ENCODE measurements at regions of chr18 and their contacts with region 1.

Region 1: DNA sequence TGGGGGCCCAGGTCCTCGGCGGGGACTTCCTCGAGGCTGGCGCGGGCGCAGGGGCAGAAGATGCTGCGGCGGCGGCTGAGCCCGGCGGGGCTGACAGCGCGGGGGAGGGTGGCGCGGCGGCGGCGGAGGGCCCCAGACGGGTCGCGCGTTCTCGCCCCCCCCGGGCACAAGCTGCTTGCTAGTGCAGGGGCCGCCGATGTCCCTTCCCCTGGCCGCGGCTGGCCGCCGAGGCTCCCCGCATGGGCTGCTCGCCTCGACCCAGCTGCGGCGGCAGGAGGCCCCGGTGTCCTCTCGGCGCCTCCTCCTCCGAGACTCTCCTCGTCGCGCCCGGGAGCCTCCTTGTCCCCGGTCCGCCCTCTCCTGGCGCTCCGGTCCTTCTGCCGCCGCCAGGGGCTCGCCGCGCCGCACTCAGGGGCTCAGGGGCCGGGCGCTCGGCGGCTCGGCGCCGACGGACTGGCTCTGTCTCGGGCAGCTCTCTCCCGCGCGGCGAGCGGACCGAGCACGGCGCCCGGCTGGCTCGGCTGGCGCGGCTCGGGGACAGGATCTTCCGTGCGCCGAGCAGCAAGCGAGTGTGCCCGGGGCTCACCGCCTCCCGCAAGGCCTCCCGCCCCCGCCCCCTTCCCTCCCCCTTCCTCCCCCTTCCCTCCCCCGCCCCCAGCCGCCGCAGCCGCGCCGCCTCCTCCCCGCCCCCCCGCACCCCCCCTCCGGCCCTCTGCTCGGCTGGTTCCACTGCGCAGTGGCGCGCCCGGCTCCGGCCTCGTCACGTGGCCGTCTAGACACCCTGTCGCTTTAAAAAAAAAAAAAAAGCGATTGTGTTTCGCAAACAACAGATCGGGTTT is 902 bp upstream of the SMAD7 start:
- DNase-seq: peak; percentile 71 to 86 (median 75)
- H3K4me3 ChIP-seq: peak overlapping the region; percentile 52 to 64
- H3K4me3 Mint-ChIP-seq: peak overlapping the region; percentile 93 to 99 (median 96)
- H3K27ac ChIP-seq: peak overlapping the region; percentile 74
- H3K27ac Mint-ChIP-seq: peak overlapping the region; percentile 95 to 100 (median 98)
- H3K4me1 ChIP-seq: peaks cover 56% of the 10 kb centered on the region
- H3K4me1 Mint-ChIP-seq: peaks cover 38 to 74% (median 42%) of the 10 kb centered on the region in 4 donors
- H3K27me3 ChIP-seq: no peaks in the 10 kb centered on the region
- H3K27me3 Mint-ChIP-seq: no peaks in the 10 kb centered on the region

Region 2: DNA sequence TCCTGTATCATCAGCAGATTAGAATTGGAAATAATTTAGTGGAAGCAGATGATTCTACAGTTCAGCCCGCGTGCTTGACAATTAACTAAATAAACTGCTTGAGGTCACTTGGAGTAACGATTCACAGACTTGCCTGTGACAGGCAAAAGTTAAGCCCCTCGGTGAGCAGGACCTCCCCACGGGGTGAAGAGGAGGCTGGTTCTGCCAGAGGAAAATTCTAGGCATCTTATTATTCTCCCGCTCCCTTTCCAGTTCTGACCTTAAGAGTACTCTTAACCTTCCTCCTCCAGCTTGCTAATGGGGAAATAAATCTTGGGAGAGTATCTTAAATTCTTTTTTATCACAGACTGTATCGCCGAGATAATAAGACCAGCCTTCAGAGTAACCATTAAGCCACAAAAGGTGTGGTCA is 851.5 kb before region 1 on chr18:
- CTCF ChIA-PET with region 1: no interaction called
- POLR2A ChIA-PET with region 1: no interaction called
- intact Hi-C with region 1: no loop called
- DNase-seq: no peak
- H3K4me3 ChIP-seq: no peak overlapping the region
- H3K4me3 Mint-ChIP-seq: no peak overlapping the region
- H3K27ac ChIP-seq: no peak overlapping the region
- H3K27ac Mint-ChIP-seq: no peak overlapping the region
- H3K4me1 ChIP-seq: no peaks in the 10 kb centered on the region
- H3K4me1 Mint-ChIP-seq: no peaks in the 10 kb centered on the region
- H3K27me3 ChIP-seq: no peaks in the 10 kb centered on the region
- H3K27me3 Mint-ChIP-seq: peaks cover 11 to 12% of the 10 kb centered on the region in 2 donors

Region 3: DNA sequence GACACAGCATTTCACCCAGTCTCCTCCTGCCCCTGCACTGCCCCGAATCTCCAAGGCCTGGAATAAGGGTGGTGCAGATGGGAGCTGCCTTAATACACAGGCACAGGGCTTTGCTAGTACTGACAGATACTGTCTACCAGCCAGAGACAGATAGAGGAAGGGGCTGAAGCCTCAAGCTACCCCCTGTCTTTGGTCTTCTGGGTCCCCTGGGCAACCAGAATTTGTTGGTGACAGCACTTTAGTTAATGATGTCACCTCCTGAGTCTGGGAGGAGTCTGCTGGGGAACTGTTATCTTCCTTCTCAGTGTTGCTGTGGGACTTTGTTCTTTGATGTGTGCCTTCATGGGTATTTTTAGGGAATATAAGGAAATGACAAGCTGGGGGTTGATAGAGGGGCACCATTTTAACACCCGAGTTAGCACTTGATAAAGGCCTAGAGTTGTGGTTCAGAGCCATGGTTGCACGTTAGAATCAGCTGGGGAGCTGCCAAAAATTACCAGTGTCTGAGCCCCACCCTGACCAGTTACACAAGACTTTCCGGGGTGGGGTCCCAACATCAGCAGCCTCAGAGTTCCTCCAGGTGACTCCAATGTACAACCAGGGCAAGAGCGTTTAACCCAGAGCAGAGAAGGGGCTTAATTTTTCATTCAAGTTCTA is 137.7 kb before region 1 on chr18:
- CTCF ChIA-PET with region 1: interaction called, 4 read pairs
- POLR2A ChIA-PET with region 1: interaction called, 14 read pairs
- intact Hi-C with region 1: no loop called
- DNase-seq: peak; percentile 71 to 86 (median 80)
- H3K4me3 ChIP-seq: no peak overlapping the region
- H3K4me3 Mint-ChIP-seq: peak overlapping the region; percentile 22 to 86 (median 59)
- H3K27ac ChIP-seq: peak overlapping the region; percentile 82
- H3K27ac Mint-ChIP-seq: peak overlapping the region; percentile 91 to 99 (median 97)
- H3K4me1 ChIP-seq: peaks cover 47% of the 10 kb centered on the region
- H3K4me1 Mint-ChIP-seq: peaks cover 41 to 66% (median 54%) of the 10 kb centered on the region in 4 donors
- H3K27me3 ChIP-seq: no peaks in the 10 kb centered on the region
- H3K27me3 Mint-ChIP-seq: no peaks in the 10 kb centered on the region

Region 4: GRCh38 chr18:48913201-48913600 is 38.5 kb before region 1 on chr18:
- CTCF ChIA-PET with region 1: interaction called, 9 read pairs
- POLR2A ChIA-PET with region 1: interaction called, 3 read pairs
- intact Hi-C with region 1: loop called (anchors 5 kb)
- DNase-seq: peak; percentile 56 to 68 (median 62)
- H3K4me3 ChIP-seq: no peak overlapping the region
- H3K4me3 Mint-ChIP-seq: no peak overlapping the region
- H3K27ac ChIP-seq: no peak overlapping the region
- H3K27ac Mint-ChIP-seq: peak overlapping the region in 3 of 7 donors; percentile 73 to 89 (median 81)
- H3K4me1 ChIP-seq: peaks cover 14% of the 10 kb centered on the region
- H3K4me1 Mint-ChIP-seq: peaks cover 16 to 48% (median 24%) of the 10 kb centered on the region in 4 donors
- H3K27me3 ChIP-seq: no peaks in the 10 kb centered on the region
- H3K27me3 Mint-ChIP-seq: peaks cover 0 to 1% of the 10 kb centered on the region in 2 donors

Region 5: GRCh38 chr18:48975649-48976204 is 24.1 kb after region 1 on chr18:
- CTCF ChIA-PET with region 1: no interaction called
- POLR2A ChIA-PET with region 1: interaction called, 5 read pairs
- intact Hi-C with region 1: loop called (anchors 2 kb)
- DNase-seq: peak; percentile 47 to 58 (median 49)
- H3K4me3 ChIP-seq: peak overlapping the region in 1 of 2 donors; percentile 57
- H3K4me3 Mint-ChIP-seq: peak overlapping the region in 2 of 8 donors; percentile 36
- H3K27ac ChIP-seq: peak overlapping the region; percentile 6
- H3K27ac Mint-ChIP-seq: no peak overlapping the region
- H3K4me1 ChIP-seq: peaks cover 4% of the 10 kb centered on the region
- H3K4me1 Mint-ChIP-seq: peaks cover 7 to 15% (median 11%) of the 10 kb centered on the region in 4 donors
- H3K27me3 ChIP-seq: no peaks in the 10 kb centered on the region
- H3K27me3 Mint-ChIP-seq: peaks cover 6 to 9% of the 10 kb centered on the region in 2 donors

Region 6: GRCh38 chr18:49250816-49251388 is 299.2 kb after region 1 on chr18:
- CTCF ChIA-PET with region 1: no interaction called
- POLR2A ChIA-PET with region 1: no interaction called
- intact Hi-C with region 1: no loop called
- DNase-seq: no peak
- H3K4me3 ChIP-seq: no peak overlapping the region
- H3K4me3 Mint-ChIP-seq: no peak overlapping the region
- H3K27ac ChIP-seq: no peak overlapping the region
- H3K27ac Mint-ChIP-seq: peak overlapping the region in 2 of 7 donors; percentile 77 to 80
- H3K4me1 ChIP-seq: no peaks in the 10 kb centered on the region
- H3K4me1 Mint-ChIP-seq: peaks cover 0 to 6% (median 3%) of the 10 kb centered on the region in 4 donors
- H3K27me3 ChIP-seq: no peaks in the 10 kb centered on the region
- H3K27me3 Mint-ChIP-seq: no peaks in the 10 kb centered on the region

Region 7: DNA sequence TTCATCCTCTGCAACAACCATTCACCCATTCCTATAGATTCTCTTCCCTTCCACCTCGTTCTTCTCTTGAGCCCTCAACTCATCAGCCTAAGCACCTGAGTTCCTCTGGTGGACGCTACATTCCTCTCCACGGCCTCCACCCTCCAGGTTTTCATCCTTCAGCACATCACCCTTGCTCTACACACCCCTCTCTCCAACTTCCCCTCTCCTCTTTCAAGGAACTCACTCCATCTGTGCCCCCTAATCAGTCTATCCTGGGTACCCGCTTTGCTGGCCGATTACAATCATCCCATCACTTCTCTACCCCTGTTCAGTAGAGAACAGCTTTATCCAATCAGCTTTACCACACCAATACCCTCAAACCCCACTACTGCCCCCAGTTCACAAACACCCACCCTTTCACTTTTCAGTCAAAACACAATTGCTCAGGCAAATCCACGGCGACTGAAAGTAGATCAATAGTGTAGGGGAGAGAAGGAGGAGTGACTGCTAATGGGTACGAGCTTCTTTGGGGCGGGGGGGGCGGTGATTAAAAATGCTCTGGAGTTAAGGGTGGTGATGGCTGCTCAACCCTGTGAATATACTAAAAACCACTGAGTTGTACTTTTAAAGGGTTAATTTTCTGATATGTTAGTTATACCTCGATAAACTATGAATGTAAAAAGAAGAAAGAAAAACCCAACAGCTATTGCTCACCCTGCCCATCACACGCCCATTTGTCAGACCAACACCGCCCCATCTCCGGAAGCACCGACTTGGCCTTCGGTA is 507.9 kb after region 1 on chr18:
- CTCF ChIA-PET with region 1: no interaction called
- POLR2A ChIA-PET with region 1: no interaction called
- intact Hi-C with region 1: loop called (anchors 2 kb)
- DNase-seq: peak in 4 of 5 donors; percentile 16 to 53 (median 26)
- H3K4me3 ChIP-seq: peak overlapping the region; percentile 43 to 89
- H3K4me3 Mint-ChIP-seq: peak overlapping the region; percentile 86 to 95 (median 91)
- H3K27ac ChIP-seq: peak overlapping the region; percentile 85
- H3K27ac Mint-ChIP-seq: peak overlapping the region; percentile 67 to 93 (median 90)
- H3K4me1 ChIP-seq: peaks cover 45% of the 10 kb centered on the region
- H3K4me1 Mint-ChIP-seq: peaks cover 34 to 61% (median 44%) of the 10 kb centered on the region in 4 donors
- H3K27me3 ChIP-seq: no peaks in the 10 kb centered on the region
- H3K27me3 Mint-ChIP-seq: no peaks in the 10 kb centered on the region

Region 8: GRCh38 chr18:50287441-50288347 is 1336.0 kb after region 1 on chr18 and contains the start of gene CXXC1:
- CTCF ChIA-PET with region 1: no interaction called
- POLR2A ChIA-PET with region 1: no interaction called
- intact Hi-C with region 1: loop called (anchors 10 kb)
- DNase-seq: peak; percentile 96 to 99 (median 98)
- H3K4me3 ChIP-seq: peak within 1 kb of the TSS; percentile 82 to 88
- H3K4me3 Mint-ChIP-seq: peak within 1 kb of the TSS; percentile 96 to 100 (median 99)
- H3K27ac ChIP-seq: peak within 1 kb of the TSS; percentile 82
- H3K27ac Mint-ChIP-seq: peak within 1 kb of the TSS; percentile 91 to 100 (median 100)
- H3K4me1 ChIP-seq: peaks cover 14% of the 10 kb centered on the region
- H3K4me1 Mint-ChIP-seq: peaks cover 19 to 44% (median 28%) of the 10 kb centered on the region in 4 donors
- H3K27me3 ChIP-seq: no peaks in the 10 kb centered on the region
- H3K27me3 Mint-ChIP-seq: no peaks in the 10 kb centered on the region
- total RNA-seq, gene CXXC1: 165 to 191 TPM

Measured in CD4-positive, alpha-beta memory T cell (primary cell).